Transverse colon (tissue), 4 donors: ENCODE measurements at regions of chr12 and their contacts with region 1.

Region 1: GRCh38 chr12:100733817-100734593 is 60.6 kb upstream of the ANO4 start:
- DNase-seq: no peak
- H3K4me3 ChIP-seq: no peak overlapping the region
- H3K27ac ChIP-seq: no peak overlapping the region
- H3K4me1 ChIP-seq: no peaks in the 10 kb centered on the region
- H3K27me3 ChIP-seq: no peaks in the 10 kb centered on the region
- CTCF ChIP-seq: peak; percentile 42 to 62 (median 49)
- EP300 ChIP-seq: no peak
- POLR2A ChIP-seq: no peak

Region 2: DNA sequence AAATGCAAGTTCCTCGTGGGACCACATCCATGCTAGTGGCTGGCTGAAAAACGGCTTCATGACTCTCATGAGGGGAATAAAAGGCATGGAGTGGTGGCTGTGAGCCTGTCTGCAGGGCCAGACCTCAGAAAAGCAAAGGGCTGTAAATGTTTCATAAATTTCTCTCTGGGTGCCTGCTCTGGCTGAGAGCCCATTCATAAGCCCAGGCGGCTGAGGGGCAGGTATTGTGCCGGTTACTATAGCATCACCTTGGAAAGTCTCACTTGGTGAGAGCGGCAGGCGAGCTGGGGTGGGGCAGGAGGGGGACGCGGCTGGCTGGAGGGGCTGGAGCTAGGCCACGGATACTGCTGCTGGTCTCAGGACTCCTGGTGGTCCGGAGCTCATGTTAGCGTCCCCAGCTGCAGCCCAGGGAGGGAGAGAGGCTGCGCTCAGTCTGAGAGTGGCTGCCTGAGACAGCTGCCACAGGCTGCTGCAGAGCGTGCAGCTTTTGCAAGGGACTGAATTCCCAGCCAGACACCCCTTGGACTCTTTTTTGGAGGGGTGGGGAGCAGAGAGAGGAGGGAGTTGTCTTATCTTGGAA is 377.3 kb before region 1 on chr12 and contains the start of gene SLC17A8:
- in situ Hi-C with region 1: loop called in 3 of 4 experiments (anchors 25 kb)
- intact Hi-C with region 1: no loop called
- DNase-seq: peak; percentile 13
- H3K4me3 ChIP-seq: no peak within 1 kb of the TSS
- H3K27ac ChIP-seq: no peak within 1 kb of the TSS
- H3K4me1 ChIP-seq: peaks cover 0 to 7% (median 0%) of the 10 kb centered on the region in 4 donors
- H3K27me3 ChIP-seq: no peaks in the 10 kb centered on the region
- CTCF ChIP-seq: no peak
- EP300 ChIP-seq: no peak
- POLR2A ChIP-seq: no peak
- total RNA-seq, gene SLC17A8: 5.4 to 21.8 (median 7.5) TPM

Region 3: GRCh38 chr12:100539202-100539601 is 194.8 kb before region 1 on chr12:
- in situ Hi-C with region 1: no loop called
- intact Hi-C with region 1: no loop called
- DNase-seq: no peak
- H3K4me3 ChIP-seq: no peak overlapping the region
- H3K27ac ChIP-seq: no peak overlapping the region
- H3K4me1 ChIP-seq: no peaks in the 10 kb centered on the region
- H3K27me3 ChIP-seq: no peaks in the 10 kb centered on the region
- CTCF ChIP-seq: no peak
- EP300 ChIP-seq: no peak
- POLR2A ChIP-seq: no peak

Region 4: DNA sequence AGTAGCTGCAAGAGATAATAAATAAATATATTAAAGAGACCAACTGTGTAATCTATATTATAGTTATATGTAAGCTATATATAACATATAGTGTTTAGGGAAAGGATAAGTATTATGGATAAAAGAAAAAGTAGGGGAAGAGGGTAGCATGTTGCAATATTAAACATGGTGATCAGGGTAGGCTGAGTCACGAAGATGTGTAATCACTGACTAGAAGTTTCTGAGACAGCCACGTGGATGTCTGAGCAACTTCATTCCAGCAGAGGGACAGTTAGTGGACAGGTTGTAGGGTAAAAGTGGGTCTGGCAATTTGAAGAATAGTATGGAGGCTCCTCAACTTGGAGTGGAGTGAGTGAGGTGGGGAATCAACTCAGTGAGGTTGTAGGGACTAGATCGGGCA is 170.3 kb after region 1 on chr12:
- in situ Hi-C with region 1: no loop called
- intact Hi-C with region 1: no loop called
- DNase-seq: no peak
- H3K4me3 ChIP-seq: no peak overlapping the region
- H3K27ac ChIP-seq: no peak overlapping the region
- H3K4me1 ChIP-seq: no peaks in the 10 kb centered on the region
- H3K27me3 ChIP-seq: no peaks in the 10 kb centered on the region
- CTCF ChIP-seq: no peak
- EP300 ChIP-seq: no peak
- POLR2A ChIP-seq: no peak

Region 5: DNA sequence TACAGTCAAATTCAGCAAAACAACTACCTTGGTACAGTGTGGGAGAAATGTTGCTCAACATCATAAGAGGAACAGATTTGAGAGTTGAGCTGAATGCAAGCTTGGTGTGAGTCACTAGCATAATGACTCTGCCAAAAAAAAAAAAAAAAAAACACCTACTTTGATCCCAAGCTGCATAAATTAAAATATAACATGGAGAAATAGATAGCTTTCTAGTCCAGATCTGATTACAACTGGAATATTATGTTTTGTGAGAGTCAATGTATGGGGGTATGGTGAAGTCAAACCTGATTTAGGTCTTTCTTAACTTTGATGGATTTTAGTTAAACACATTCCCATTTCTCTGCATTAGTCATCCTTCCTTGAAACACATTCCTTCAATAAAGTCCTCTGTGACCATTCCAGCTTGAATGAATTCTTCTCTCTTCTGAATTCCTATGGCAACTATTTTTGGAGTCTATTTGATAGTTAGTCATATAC is 287.9 kb after region 1 on chr12:
- in situ Hi-C with region 1: no loop called
- intact Hi-C with region 1: no loop called
- DNase-seq: no peak
- H3K4me3 ChIP-seq: no peak overlapping the region
- H3K27ac ChIP-seq: no peak overlapping the region
- H3K4me1 ChIP-seq: no peaks in the 10 kb centered on the region
- H3K27me3 ChIP-seq: no peaks in the 10 kb centered on the region
- CTCF ChIP-seq: no peak
- EP300 ChIP-seq: no peak
- POLR2A ChIP-seq: no peak